ENCODE measurements at regions of chr22 and their contacts with region 1.

Region 1: DNA sequence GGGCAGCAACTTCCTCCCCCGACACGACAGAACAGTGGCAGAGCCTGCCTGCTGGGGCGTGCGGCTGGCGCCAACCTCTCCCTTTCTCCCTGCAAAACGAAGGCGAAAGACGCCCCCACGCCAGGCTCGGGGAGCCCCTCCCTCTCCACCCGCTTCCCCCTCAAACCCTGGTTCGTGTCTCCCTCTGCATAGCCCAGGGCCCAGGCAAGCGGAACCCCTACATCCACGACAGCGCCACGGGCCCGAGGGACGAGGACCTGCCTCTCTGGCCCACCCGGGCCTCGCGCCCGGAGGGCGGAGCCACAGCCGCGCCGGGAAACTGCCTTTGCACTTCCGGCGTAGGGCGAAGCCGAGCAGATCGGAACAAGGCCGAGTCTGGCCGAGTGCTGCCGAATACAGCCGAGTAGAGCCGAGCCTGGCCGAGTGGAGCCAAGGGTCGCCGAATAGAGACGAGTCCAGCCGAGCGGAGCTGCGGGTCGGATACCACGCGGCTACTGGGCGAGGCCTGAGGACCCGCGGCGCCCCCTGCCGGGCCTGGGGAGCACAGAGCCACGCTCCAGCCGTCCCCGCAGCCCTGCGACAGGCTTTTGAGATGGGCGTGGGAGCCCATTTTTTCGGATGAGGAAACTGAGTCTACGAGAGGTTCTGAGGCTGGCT is 11.2 kb upstream of the C1QTNF6 start:
- DNase-seq: peak; percentile 100
- H3K4me3 Mint-ChIP-seq: peak overlapping the region; percentile 86
- H3K27ac Mint-ChIP-seq: peak overlapping the region; percentile 94
- H3K4me1 Mint-ChIP-seq: peaks cover 36% of the 10 kb centered on the region
- H3K27me3 Mint-ChIP-seq: no peaks in the 10 kb centered on the region

Region 2: DNA sequence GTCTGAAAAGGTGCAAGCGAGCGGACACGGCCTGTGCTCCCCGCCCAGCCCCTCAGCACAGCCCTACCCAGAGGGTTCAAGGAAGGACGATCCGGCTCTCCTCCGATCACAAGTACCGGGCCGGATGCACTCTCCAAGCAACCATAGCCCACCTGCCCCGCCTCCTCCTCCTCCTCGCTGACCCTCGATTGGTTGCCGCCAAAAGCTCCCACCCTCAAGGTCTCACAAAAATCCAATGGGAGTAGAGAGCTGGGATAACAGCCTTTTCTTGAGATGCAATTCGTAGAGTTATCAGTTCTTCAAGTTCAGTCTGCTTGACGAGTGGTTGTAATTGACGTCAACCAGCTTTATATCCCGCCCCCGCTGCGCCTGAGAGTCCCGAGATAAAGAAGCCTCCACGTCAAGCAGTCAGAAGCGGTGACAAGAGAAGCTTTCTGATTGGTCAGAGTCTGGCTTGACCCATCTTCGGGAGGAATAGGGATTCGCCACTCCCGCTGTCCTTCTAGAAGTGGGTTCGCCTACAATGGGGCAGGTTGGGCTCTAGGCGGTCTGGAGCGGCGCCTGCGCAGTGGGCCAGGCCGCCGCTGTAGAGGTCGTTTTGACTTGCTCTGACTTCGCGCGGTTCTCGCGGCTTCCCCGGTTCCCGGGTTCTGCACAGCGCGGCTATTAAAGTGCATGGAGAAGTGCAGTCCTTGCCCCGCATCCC is 423.1 kb before region 1 on chr22 and contains the start of gene IFT27:
- intact Hi-C with region 1: loop called (anchors 5 kb)
- DNase-seq: peak; percentile 98
- H3K4me3 Mint-ChIP-seq: peak within 1 kb of the TSS; percentile 91
- H3K27ac Mint-ChIP-seq: peak within 1 kb of the TSS; percentile 92
- H3K4me1 Mint-ChIP-seq: peaks cover 29% of the 10 kb centered on the region
- H3K27me3 Mint-ChIP-seq: no peaks in the 10 kb centered on the region
- total RNA-seq, gene IFT27: 30.0 and 34.7 TPM in 2 replicates

Region 3: GRCh38 chr22:37051391-37052385 is 147.5 kb before region 1 on chr22 and contains the start of gene KCTD17:
- intact Hi-C with region 1: loop called (anchors 2 kb)
- DNase-seq: peak; percentile 75
- H3K4me3 Mint-ChIP-seq: peak within 1 kb of the TSS; percentile 83
- H3K27ac Mint-ChIP-seq: peak within 1 kb of the TSS; percentile 18
- H3K4me1 Mint-ChIP-seq: peaks cover 10% of the 10 kb centered on the region
- H3K27me3 Mint-ChIP-seq: no peaks in the 10 kb centered on the region
- total RNA-seq, gene KCTD17: 70.4 and 81.9 TPM in 2 replicates

Region 4: GRCh38 chr22:37121887-37122591 is 77.2 kb before region 1 on chr22:
- intact Hi-C with region 1: loop called (anchors 1 kb)
- DNase-seq: peak; percentile 92
- H3K4me3 Mint-ChIP-seq: peak overlapping the region; percentile 76
- H3K27ac Mint-ChIP-seq: peak overlapping the region; percentile 100
- H3K4me1 Mint-ChIP-seq: peaks cover 73% of the 10 kb centered on the region
- H3K27me3 Mint-ChIP-seq: no peaks in the 10 kb centered on the region

Region 5: GRCh38 chr22:37166675-37167066 is 32.6 kb before region 1 on chr22:
- intact Hi-C with region 1: loop called (anchors 1 kb)
- DNase-seq: peak; percentile 75
- H3K4me3 Mint-ChIP-seq: peak overlapping the region; percentile 68
- H3K27ac Mint-ChIP-seq: peak overlapping the region; percentile 79
- H3K4me1 Mint-ChIP-seq: peaks cover 64% of the 10 kb centered on the region
- H3K27me3 Mint-ChIP-seq: no peaks in the 10 kb centered on the region

Region 6: DNA sequence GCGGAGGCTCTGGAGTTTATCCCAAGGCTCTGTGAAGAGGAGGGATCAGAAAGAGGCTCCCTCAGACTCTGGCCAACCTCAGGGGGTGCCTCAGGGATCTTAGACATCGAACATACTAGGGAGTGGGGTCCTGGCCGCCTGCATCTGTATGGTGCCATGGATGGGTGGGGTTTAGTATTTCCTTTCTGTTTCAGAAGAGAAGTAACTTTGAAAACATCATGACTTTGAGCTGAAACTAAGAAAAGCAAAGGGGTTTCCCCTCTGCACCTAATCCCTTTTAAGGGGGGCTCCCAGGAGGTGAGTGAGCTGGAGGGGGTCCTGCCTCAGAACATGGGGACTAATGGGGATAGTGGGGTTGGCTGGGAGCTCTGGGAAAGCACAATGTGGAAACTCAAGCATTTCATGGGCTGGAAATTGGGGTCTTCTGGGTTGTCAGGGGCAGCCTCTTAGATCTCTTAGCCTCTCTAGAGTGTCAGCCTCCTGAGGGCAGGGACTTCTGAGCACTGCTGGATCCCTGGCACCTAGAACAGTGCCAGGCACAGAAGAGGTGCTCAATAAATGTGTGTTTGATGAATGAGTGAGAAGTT is 24.8 kb after region 1 on chr22:
- intact Hi-C with region 1: loop called (anchors 1 kb)
- DNase-seq: no peak
- H3K4me3 Mint-ChIP-seq: peak overlapping the region; percentile 43
- H3K27ac Mint-ChIP-seq: peak overlapping the region; percentile 85
- H3K4me1 Mint-ChIP-seq: peaks cover 85% of the 10 kb centered on the region
- H3K27me3 Mint-ChIP-seq: no peaks in the 10 kb centered on the region

Region 7: DNA sequence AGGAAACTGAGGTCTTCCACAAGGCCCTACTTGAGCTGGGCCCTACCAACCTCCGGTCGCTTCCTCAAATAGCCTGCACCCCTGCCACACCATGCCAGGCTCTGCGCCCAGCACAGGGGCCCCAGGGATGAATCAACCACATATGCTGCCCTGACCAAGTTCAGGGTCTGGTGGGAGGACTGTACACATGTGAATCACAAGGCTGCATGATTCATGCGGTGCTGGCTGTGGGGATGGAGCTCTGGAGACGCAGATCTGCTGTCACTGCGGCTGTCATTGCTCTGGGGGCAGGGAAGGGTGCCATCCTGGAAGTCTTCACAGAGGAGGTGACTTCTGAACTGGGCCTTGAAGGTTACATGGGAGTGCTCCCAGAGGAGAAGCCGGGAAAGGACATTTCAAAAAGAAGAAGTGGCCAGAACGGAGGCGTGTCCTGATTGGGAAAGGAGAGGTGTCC is 104.6 kb after region 1 on chr22:
- intact Hi-C with region 1: no loop called
- DNase-seq: peak; percentile 26
- H3K4me3 Mint-ChIP-seq: peak overlapping the region; percentile 44
- H3K27ac Mint-ChIP-seq: peak overlapping the region; percentile 89
- H3K4me1 Mint-ChIP-seq: peaks cover 78% of the 10 kb centered on the region
- H3K27me3 Mint-ChIP-seq: no peaks in the 10 kb centered on the region

Region 8: DNA sequence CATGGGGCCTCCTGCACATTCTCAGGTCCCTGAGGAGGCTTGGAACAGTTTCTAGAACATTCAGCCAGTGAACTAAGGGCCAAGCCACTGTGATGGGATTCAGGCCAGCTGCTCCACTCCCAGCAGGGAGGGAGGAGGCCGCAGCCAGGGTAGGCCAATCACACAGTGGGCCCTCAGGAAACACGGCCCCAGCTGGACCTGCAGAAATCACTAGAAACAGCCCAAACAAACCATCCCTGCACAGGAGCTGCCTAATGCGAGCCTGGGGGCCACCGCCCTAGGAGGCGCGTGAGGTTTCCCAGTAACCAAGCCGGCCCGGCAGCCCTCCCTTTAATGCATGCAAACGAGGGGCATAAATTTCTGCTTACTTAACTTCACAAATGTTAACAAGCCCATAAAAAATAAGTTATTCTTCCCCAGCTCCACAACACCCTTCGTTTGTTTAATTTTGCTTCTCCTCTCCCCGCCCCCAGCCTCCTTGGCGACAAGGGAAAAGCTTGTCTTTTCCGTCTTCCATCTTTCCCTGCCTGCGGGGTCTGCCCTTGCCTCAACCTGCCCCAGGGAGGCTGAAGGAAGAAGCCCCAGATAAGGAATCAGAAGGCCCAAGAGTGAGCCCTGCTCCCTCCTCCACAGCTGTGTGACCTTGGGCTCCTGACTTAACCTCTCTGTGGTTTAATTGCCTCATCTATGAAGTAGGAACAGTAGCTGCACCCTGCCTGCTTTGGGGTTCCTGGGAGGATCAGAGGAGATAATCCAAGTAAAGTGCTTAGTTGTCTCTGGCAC is 202.4 kb after region 1 on chr22:
- intact Hi-C with region 1: no loop called
- DNase-seq: no peak
- H3K4me3 Mint-ChIP-seq: no peak overlapping the region
- H3K27ac Mint-ChIP-seq: no peak overlapping the region
- H3K4me1 Mint-ChIP-seq: no peaks in the 10 kb centered on the region
- H3K27me3 Mint-ChIP-seq: no peaks in the 10 kb centered on the region

Region 9: DNA sequence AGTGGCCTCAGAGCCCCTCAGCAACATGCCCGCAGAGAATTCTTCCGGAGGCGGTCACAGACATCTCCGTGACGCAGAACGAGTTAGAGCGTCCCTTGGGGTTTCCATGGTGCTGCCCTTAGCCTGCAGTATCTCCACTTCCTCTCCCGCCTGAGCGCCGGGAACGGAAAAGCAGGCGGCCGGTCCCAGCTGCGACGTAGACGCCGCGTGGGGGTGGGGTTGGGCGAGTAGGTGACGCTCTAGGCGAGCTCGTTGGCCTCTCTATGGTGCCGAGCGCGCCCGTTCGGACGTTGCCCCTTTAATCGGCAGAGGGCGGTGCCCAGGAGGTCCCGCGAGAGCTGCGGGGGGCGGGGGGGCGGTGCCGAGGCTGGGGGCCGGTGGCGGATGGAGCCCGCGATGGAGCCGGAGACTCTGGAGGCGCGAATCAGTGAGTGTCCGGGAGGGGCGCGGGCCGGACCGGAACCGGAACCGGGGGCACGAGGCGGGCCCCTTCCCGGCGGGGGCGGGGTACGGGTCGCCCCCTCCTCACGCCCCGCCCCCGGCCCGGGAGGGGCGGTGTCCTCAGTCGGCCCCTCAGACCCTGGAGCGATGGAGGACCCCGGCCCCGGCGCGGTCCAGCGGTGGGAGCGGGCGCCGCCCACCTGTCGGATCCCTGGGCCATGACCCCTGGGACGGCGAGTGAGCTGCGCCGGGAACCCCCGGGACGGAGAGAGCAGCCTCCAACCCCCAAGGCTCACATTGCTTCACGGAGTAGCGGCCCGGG is 409.4 kb after region 1 on chr22 and contains the start of gene GGA1:
- intact Hi-C with region 1: no loop called
- DNase-seq: peak; percentile 98
- H3K4me3 Mint-ChIP-seq: peak within 1 kb of the TSS; percentile 94
- H3K27ac Mint-ChIP-seq: peak within 1 kb of the TSS; percentile 97
- H3K4me1 Mint-ChIP-seq: peaks cover 41% of the 10 kb centered on the region
- H3K27me3 Mint-ChIP-seq: no peaks in the 10 kb centered on the region
- total RNA-seq, gene GGA1: 69.3 and 71.2 TPM in 2 replicates